Left colon (tissue), 2 donors: ENCODE measurements at regions of chr9 and their contacts with region 1.

Region 1: DNA sequence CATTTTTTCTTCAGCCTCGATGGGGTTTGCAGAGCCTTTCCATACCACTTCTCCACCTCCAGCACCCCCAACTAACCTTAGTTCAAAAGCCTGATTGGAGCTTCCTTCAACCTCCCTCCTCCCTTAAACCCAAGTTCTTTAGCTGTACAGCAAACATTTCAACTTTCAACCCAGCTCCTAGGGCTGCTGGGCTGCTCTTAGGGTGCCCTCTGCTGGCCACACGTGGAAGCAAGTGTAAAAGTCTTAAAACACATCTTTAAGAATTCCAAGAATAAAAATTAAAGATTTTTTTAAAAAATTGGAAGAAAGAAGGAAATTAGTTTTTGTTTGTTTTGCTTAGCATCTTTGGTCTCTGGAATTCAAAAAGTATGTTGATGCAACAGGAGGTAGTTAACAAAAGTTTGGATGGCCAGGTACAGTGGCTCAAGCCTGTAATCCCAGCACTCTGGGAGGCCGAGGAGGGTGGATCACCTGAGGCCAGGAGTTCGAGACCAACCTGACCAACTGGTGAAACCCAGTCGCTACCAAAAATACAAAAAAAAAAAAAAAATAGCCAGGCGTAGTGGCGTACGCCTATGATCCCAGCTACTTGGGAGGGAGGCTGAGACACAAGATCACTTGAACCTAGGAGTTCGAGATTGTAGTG is 15.5 kb upstream of the HSD17B3 start:
- DNase-seq: peak in 1 of 2 donors; percentile 52
- ATAC-seq: peak; percentile 70

Region 2: GRCh38 chr9:96232539-96233241 is 84.8 kb before region 1 on chr9:
- intact Hi-C with region 1: loop called in 1 of 2 experiments (anchors 10 kb)
- DNase-seq: peak in 1 of 2 donors; percentile 27
- ATAC-seq: peak; percentile 61

Region 3: DNA sequence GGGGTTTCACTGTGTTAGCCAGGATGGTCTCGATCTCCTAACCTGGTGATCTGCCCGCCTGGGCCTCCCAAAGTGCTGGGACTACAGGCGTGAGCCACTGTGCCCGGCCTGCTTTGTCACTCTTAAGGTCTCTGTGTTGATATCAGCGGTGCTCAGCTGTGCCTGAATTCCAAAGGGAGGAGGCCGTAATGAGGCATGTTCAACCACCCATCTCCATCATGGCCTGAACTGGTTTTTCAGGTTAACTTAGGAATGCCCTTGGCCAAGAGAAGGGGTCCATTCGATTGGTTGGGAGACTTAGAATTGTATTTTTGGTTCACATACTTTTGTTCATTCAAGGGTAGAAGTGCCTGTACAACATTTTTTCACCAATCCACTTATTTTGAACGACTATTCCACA is 37.5 kb before region 1 on chr9:
- intact Hi-C with region 1: no loop called
- DNase-seq: no peak
- ATAC-seq: no peak

Region 4: DNA sequence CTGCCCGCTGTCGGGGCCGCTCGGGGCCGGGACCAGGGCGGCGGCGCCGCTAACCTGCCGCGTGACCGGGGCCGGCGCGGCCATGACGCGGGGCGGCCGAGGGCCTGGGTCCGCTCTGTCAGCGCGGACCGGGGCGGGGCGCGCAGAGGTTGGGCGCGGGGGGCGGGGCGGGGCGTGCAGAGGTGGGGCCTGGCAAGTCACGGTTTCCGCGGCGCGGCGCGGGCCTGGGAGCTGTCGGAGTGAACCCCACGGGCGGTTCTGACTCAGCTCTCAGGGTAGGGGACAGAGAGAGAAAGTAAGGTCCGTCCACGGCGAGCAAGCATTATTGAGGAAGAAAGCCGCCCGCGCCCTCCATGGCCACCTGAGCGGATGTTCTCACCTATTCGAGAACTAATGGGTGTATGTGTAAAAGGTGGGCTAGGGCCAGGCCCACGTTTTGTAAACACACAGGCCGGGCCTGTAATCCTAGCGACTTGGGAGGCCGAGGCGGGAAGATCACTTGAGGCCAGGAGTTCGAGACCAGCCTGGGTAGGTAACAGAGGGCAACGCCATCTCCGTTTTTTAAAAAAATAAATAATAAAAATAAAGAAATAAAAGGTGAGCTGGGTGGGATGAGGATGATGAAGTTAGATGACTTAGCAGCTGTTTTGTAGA is 337.9 kb after region 1 on chr9 and contains the start of gene PRXL2C:
- intact Hi-C with region 1: no loop called
- DNase-seq: peak; percentile 84 to 91
- ATAC-seq: peak; percentile 77
- total RNA-seq, gene PRXL2C: 2.4 to 6.0 TPM